MCF 10A (cell line): ENCODE measurements at regions of chr15 and their contacts with region 1.

Region 1: GRCh38 chr15:45126535-45127158 is 3.0 kb downstream of the DUOXA1 start:
- DNase-seq: peak; percentile 63
- H3K4me3 Mint-ChIP-seq: no peak overlapping the region
- H3K27ac Mint-ChIP-seq: no peak overlapping the region
- H3K4me1 Mint-ChIP-seq: peaks cover 11% of the 10 kb centered on the region
- H3K27me3 Mint-ChIP-seq: peaks cover 21% of the 10 kb centered on the region
- CTCF ChIP-seq: peak; percentile 70

Region 2: DNA sequence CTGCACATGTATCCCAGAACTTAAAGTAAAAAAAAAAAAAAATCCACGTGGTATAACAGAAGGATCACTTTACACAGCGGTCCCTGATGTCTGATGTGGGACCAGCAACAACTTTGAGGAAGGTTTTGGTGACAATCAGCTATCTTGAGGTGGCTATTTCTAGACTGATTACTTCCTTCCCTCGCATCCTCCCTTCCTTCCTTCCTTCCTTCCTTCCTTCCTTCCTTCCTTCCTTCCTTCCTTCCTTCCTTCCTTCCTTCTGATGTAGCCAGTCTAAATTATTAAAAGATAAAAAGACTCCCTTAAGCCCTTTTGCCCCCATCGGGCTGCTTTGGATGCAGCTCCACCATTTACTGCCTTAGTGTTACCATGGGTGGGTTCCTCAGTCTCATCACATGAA is 88.7 kb before region 1 on chr15:
- CTCF ChIA-PET with region 1: no interaction called
- POLR2A ChIA-PET with region 1: no interaction called
- intact Hi-C with region 1: no loop called
- DNase-seq: no peak
- H3K4me3 Mint-ChIP-seq: no peak overlapping the region
- H3K27ac Mint-ChIP-seq: peak overlapping the region; percentile 56
- H3K4me1 Mint-ChIP-seq: peaks cover 6% of the 10 kb centered on the region
- H3K27me3 Mint-ChIP-seq: no peaks in the 10 kb centered on the region
- CTCF ChIP-seq: no peak

Region 3: GRCh38 chr15:45146405-45146804 is 19.8 kb after region 1 on chr15:
- CTCF ChIA-PET with region 1: interaction called, 13 read pairs
- POLR2A ChIA-PET with region 1: interaction called, 6 read pairs
- intact Hi-C with region 1: no loop called
- DNase-seq: no peak
- H3K4me3 Mint-ChIP-seq: no peak overlapping the region
- H3K27ac Mint-ChIP-seq: no peak overlapping the region
- H3K4me1 Mint-ChIP-seq: peaks cover 19% of the 10 kb centered on the region
- H3K27me3 Mint-ChIP-seq: no peaks in the 10 kb centered on the region
- CTCF ChIP-seq: no peak

Region 4: DNA sequence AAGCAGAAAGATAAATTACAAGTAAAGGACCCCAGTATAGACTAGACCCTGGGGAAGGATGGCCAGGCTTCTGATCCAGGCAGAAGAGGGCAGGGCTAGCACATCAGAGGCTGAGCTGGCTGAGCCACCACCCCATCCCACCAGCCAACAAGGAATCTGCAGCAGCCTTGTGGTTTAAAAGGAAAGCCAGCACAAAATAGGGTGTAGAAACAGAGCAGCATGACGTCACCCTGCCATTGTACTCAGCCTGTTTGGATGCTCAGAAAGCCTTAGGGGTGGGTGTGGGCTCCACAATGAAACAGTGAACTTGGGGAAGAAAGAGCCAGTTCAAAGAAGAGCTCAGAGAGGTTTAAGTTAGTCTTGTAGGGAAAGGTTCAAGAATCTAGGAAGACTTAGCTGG is 31.3 kb after region 1 on chr15:
- CTCF ChIA-PET with region 1: interaction called, 93 read pairs
- POLR2A ChIA-PET with region 1: interaction called, 9 read pairs
- intact Hi-C with region 1: loop called (anchors 1 kb)
- DNase-seq: peak; percentile 83
- H3K4me3 Mint-ChIP-seq: no peak overlapping the region
- H3K27ac Mint-ChIP-seq: peak overlapping the region; percentile 61
- H3K4me1 Mint-ChIP-seq: peaks cover 39% of the 10 kb centered on the region
- H3K27me3 Mint-ChIP-seq: no peaks in the 10 kb centered on the region
- CTCF ChIP-seq: no peak

Region 5: DNA sequence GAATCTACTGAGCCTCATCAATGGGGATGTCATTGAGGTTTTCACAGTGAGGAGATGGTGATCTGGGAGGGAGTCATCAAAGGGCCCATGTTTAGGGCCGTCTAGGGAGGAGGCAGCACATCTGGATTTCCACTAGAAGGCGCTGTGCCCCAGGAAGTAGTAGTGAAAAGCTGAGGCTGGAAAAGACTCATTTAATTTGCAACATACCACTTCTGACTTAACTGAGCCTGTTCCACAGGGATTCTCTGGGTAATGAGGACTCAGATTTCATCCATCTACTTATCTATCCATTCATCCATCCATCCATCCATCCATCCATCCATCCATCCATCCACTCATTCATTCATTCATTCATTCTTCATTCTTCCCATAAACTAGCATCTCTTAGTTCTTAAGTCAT is 78.5 kb after region 1 on chr15:
- CTCF ChIA-PET with region 1: interaction called, 18 read pairs
- POLR2A ChIA-PET with region 1: interaction called, 6 read pairs
- intact Hi-C with region 1: loop called (anchors 1 kb)
- DNase-seq: peak; percentile 80
- H3K4me3 Mint-ChIP-seq: no peak overlapping the region
- H3K27ac Mint-ChIP-seq: no peak overlapping the region
- H3K4me1 Mint-ChIP-seq: peaks cover 6% of the 10 kb centered on the region
- H3K27me3 Mint-ChIP-seq: no peaks in the 10 kb centered on the region
- CTCF ChIP-seq: peak; percentile 75

Region 6: DNA sequence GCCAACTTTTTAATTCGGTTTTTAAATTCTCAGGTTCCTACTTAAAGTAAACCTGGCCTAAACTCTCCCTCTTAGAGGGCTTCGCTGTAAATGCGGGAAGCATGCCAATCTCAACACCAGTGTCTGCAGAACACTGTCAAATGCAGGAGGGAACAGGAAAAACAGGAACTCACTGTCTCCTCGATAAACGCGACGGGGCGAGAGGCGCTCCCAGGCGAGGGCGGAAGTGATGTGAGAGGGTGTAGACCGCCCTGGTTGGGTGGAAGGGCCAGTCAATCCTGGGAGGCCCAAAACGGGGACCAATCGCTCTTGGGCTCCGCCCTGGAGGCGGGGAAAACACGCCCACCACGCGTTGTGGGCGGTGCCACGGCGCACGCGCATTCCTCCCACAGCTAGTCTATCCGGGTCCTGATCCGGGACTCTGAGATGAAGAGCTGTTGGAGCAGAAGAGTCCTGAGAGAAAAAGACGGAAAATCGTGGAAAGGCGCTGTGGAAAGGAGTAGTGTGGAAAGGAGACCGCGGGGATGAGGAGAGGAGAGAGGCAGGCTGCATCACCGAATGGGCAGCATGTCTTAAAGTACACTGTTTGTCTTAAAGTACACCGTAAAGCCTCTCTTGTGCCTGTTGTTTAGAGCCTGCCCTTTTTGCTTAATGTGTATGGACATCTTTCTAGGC is 152.5 kb after region 1 on chr15:
- CTCF ChIA-PET with region 1: interaction called, 10 read pairs
- POLR2A ChIA-PET with region 1: interaction called, 7 read pairs
- intact Hi-C with region 1: no loop called
- DNase-seq: peak; percentile 98
- H3K4me3 Mint-ChIP-seq: peak overlapping the region; percentile 75
- H3K27ac Mint-ChIP-seq: peak overlapping the region; percentile 51
- H3K4me1 Mint-ChIP-seq: no peaks in the 10 kb centered on the region
- H3K27me3 Mint-ChIP-seq: no peaks in the 10 kb centered on the region
- CTCF ChIP-seq: no peak

Region 7: DNA sequence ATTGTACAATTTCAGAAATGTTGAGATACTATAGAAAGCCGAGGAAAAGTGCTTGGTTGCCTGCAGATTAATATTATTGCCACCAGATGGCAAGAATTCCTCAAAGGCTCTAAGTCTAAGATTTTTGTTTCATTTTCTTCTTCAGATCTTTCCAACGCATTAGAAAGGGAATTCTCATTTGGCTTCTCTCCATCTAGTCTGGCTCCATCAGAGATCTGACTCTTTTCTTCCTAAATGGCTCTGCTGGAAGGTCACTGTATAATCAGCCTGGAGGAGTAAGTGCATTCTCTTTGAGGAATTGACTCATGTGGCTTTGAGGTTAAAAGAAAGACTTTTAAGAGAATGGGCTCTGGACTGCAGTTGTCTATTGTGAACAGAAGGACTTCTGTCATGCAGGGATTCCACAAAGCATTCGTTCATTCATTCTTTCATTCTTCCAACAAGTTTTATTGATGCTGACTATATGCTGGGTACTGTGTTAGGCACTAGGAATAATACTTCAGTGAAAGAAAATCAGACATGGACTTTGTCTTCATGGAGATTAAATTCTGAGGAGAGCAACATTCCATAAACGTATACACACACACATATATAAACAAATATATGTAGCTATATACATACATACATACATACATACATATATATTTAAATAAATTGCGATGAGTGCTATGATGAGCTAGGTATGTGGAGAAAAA is 180.7 kb after region 1 on chr15:
- CTCF ChIA-PET with region 1: no interaction called
- POLR2A ChIA-PET with region 1: no interaction called
- intact Hi-C with region 1: loop called (anchors 1 kb)
- DNase-seq: peak; percentile 37
- H3K4me3 Mint-ChIP-seq: peak overlapping the region; percentile 35
- H3K27ac Mint-ChIP-seq: no peak overlapping the region
- H3K4me1 Mint-ChIP-seq: peaks cover 6% of the 10 kb centered on the region
- H3K27me3 Mint-ChIP-seq: peaks cover 21% of the 10 kb centered on the region
- CTCF ChIP-seq: peak; percentile 47